ENCODE measurements at regions of chr15 and their contacts with region 1.

Region 1: DNA sequence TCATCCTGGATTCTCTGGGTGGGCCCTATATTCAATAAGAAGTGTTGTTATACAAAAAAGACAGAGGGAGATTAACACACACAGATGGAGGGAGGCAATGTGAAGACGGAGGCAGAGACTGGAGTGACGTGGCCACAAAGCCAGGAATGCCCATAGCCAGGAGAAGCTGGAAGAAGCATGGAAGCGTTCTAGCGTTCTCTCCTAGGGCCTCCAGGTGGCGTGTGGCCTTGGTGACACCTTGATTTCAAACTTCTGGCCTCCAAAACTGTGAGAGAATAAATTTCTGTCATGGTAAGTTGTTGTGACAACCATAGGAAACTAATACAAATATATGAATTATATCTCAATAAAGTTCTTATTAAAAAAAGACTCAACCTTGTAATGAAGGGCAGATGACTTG is 21.3 kb downstream of the THBS1 start:
- DNase-seq: no peak
- H3K4me3 ChIP-seq: no peak overlapping the region
- H3K27ac ChIP-seq: no peak overlapping the region
- H3K4me1 ChIP-seq: no peaks in the 10 kb centered on the region
- H3K27me3 ChIP-seq: no peaks in the 10 kb centered on the region
- CTCF ChIP-seq: no peak
- POLR2A ChIP-seq: no peak

Region 2: DNA sequence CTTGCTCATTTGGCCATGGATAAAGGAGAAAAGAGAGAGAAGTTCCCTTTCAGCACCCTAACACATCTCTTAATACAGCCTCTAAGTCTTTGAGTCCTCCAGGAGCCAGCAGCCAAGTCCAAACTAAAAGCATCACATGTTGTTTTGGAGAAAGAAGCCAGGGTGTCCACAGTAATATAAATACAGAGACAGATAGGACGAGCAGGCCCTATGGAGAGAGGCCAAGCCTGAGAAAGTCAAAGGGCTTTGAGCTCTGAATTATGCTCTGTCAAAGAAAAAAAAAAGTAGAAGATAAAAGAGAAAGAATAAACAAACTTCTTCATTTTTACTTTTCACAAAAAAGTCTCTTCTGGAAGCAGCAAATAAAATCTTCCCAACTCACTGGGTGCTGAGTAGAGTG is 113.6 kb before region 1 on chr15:
- intact Hi-C with region 1: no loop called
- DNase-seq: peak in 1 of 2 donors; percentile 40
- H3K4me3 ChIP-seq: no peak overlapping the region
- H3K27ac ChIP-seq: peak overlapping the region; percentile 75 to 78
- H3K4me1 ChIP-seq: peaks cover 0 to 4% of the 10 kb centered on the region in 2 donors
- H3K27me3 ChIP-seq: no peaks in the 10 kb centered on the region
- CTCF ChIP-seq: no peak
- POLR2A ChIP-seq: no peak

Region 3: DNA sequence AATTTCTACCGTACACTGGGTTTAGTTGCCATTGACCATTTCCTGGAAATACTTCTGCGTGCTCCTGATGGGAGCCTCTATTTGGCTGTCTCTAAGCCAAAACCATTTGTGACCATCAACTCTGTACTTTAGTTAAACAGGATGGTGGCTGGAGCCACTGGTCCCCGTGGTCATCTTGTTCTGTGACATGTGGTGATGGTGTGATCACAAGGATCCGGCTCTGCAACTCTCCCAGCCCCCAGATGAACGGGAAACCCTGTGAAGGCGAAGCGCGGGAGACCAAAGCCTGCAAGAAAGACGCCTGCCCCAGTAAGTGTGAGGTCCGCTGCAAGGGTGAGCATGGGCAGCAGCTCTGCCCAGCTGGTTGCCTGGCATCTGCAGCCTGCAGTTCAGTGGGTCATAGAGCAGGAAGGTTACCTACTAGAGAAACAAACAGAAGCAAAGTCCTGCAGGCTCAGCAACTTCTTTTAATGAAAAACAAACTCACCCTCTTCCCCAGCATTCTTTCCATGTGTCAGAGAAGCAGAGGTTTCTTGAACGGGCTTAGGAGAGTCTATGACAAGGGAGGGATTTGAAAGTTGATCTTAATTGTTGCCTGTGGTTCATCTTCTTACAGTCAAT is 14.1 kb before region 1 on chr15:
- intact Hi-C with region 1: loop called (anchors 2 kb)
- DNase-seq: no peak
- H3K4me3 ChIP-seq: peak overlapping the region in 1 of 3 donors; percentile 88
- H3K27ac ChIP-seq: peak overlapping the region in 1 of 2 donors; percentile 57
- H3K4me1 ChIP-seq: peaks cover 7 to 9% of the 10 kb centered on the region in 2 donors
- H3K27me3 ChIP-seq: no peaks in the 10 kb centered on the region
- CTCF ChIP-seq: no peak
- POLR2A ChIP-seq: no peak

Region 4: DNA sequence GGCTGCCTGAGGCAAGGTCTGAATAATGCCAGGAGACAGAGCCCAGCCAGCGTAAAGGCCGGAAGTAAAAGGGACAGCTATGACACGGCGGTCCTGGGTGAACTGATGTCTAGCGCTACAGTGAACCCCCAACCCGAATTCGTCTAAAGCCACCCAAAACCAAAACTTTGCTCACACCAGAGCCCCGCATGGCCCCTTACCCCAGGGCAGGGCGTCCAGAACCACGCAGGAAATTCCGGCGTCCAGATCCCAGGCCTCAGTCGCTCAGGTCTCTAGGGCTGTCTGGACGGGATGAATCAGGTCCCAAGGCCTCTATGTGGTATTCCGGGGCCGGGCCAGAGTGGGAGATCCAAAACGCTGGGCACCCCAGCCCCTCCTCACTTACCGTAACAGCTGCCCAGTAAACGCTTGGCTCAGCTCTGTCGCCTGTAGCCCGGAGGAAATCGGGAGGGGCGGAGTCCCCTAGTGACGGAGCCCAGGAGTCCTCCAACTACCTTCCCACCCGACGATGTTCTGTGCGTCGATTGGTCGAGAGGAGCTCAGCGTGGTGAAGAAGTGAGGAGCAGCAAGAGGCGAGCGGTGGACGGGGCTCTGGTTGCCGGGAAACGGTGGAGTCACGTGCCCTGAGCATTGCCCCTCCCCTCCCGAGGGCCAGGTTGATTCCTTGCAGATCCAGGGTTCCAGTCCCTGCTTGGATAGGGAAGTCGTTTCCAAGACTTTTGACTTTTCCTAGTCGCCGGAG is 962.6 kb after region 1 on chr15 and contains the start of gene CCDC32:
- intact Hi-C with region 1: no loop called
- DNase-seq: peak; percentile 97 to 99
- H3K4me3 ChIP-seq: peak within 1 kb of the TSS; percentile 59 to 88 (median 80)
- H3K27ac ChIP-seq: peak within 1 kb of the TSS; percentile 94 to 98
- H3K4me1 ChIP-seq: peaks cover 0 to 3% of the 10 kb centered on the region in 2 donors
- H3K27me3 ChIP-seq: no peaks in the 10 kb centered on the region
- CTCF ChIP-seq: peak in 1 of 3 donors; percentile 22
- POLR2A ChIP-seq: peak; percentile 74
- total RNA-seq, gene CCDC32: 35.0 to 42.3 (median 36.4) TPM

Measured in breast epithelium (tissue), 4 donors.